T-cell (primary cell): ENCODE measurements at regions of chr13 and their contacts with region 1.

Region 1: DNA sequence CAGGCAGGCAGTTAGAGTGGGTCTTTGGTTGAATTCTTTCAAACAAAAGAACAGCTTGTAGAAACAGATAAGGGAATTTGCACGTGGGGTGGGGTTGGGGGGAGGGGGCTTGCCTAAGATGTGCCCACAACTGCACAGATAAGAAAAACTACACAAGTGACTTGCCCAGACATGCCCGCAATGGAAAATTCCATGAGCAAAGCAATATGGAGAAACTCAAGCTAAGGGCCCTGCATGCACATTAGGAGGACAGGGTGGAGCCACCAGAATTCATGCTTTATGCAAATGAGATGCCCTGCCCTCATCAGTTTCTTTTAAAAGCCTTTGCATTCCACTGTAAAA is 755.6 kb upstream of the MIR17HG start:
- DNase-seq: no peak
- ATAC-seq: no peak
- H3K4me3 ChIP-seq: no peak overlapping the region
- H3K4me3 Mint-ChIP-seq: no peak overlapping the region
- H3K27ac ChIP-seq: no peak overlapping the region
- H3K27ac Mint-ChIP-seq: no peak overlapping the region
- H3K4me1 ChIP-seq: no peaks in the 10 kb centered on the region
- H3K4me1 Mint-ChIP-seq: no peaks in the 10 kb centered on the region
- H3K27me3 ChIP-seq: no peaks in the 10 kb centered on the region
- H3K27me3 Mint-ChIP-seq: no peaks in the 10 kb centered on the region

Region 2: GRCh38 chr13:88685459-88685858 is 1906.4 kb before region 1 on chr13:
- CTCF ChIA-PET with region 1: no interaction called
- POLR2A ChIA-PET with region 1: interaction called in 1 of 2 experiments, 18 read pairs
- DNase-seq: no peak
- ATAC-seq: no peak
- H3K4me3 ChIP-seq: no peak overlapping the region
- H3K4me3 Mint-ChIP-seq: no peak overlapping the region
- H3K27ac ChIP-seq: no peak overlapping the region
- H3K27ac Mint-ChIP-seq: no peak overlapping the region
- H3K4me1 ChIP-seq: no peaks in the 10 kb centered on the region
- H3K4me1 Mint-ChIP-seq: no peaks in the 10 kb centered on the region
- H3K27me3 ChIP-seq: no peaks in the 10 kb centered on the region
- H3K27me3 Mint-ChIP-seq: no peaks in the 10 kb centered on the region

Region 3: GRCh38 chr13:90552702-90553101 is 39.2 kb before region 1 on chr13:
- CTCF ChIA-PET with region 1: no interaction called
- POLR2A ChIA-PET with region 1: no interaction called
- DNase-seq: no peak
- ATAC-seq: no peak
- H3K4me3 ChIP-seq: no peak overlapping the region
- H3K4me3 Mint-ChIP-seq: no peak overlapping the region
- H3K27ac ChIP-seq: no peak overlapping the region
- H3K27ac Mint-ChIP-seq: no peak overlapping the region
- H3K4me1 ChIP-seq: no peaks in the 10 kb centered on the region
- H3K4me1 Mint-ChIP-seq: no peaks in the 10 kb centered on the region
- H3K27me3 ChIP-seq: no peaks in the 10 kb centered on the region
- H3K27me3 Mint-ChIP-seq: no peaks in the 10 kb centered on the region

Region 4: DNA sequence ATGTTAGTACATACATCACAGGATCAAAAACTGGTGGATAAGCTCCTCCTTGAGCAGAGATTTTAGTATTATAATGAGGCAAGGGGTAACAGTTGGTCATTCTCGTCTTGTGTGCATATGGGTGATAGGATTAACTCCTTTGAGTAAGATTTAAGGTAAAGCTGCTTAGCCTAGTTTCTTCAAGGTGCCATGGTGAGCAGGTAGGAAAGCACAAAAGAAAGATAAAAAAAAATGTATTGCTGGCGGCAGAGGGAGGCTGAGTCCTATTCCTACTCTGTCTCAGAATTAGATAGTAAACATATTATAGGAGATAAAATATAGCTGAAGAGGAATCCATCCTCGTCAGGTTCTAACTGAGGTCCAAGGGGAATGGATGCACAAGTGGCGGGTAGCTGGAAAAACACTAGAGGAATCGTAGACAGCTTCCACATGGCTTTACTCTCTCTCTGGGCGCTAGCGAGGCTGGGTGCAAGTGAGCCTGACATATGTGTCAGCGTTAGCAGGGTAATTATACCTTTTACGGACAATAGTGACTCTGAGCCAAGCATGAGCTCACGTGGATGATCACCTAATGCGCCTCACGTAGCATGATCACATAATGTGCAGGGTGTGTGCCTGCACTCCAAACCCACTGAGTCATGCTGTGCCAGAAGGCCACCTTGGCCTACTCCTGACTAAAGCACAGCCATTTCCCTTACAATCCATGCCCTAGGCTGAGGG is 21.3 kb after region 1 on chr13:
- CTCF ChIA-PET with region 1: no interaction called
- POLR2A ChIA-PET with region 1: no interaction called
- DNase-seq: no peak
- ATAC-seq: no peak
- H3K4me3 ChIP-seq: no peak overlapping the region
- H3K4me3 Mint-ChIP-seq: no peak overlapping the region
- H3K27ac ChIP-seq: no peak overlapping the region
- H3K27ac Mint-ChIP-seq: no peak overlapping the region
- H3K4me1 ChIP-seq: no peaks in the 10 kb centered on the region
- H3K4me1 Mint-ChIP-seq: no peaks in the 10 kb centered on the region
- H3K27me3 ChIP-seq: no peaks in the 10 kb centered on the region
- H3K27me3 Mint-ChIP-seq: no peaks in the 10 kb centered on the region

Region 5: DNA sequence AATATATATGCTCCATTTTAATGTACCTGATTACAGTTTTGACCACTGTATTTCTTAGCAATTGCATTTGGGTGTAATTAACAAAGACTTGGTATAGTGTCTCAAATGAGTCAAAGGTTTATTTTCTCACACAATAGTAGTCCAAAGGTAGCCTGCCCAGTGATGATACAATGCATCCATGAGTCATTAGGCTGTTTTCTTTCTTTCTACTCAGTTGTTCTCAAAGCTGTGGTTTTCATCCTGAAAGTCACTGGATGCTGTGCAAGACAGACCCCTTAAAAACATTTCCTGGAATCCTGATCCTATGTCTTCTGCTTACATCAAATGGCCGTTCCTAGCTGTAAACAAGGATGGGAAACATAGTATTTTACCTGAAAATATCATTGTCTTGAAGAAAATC is 104.4 kb after region 1 on chr13:
- CTCF ChIA-PET with region 1: no interaction called
- POLR2A ChIA-PET with region 1: no interaction called
- DNase-seq: no peak
- ATAC-seq: no peak
- H3K4me3 ChIP-seq: no peak overlapping the region
- H3K4me3 Mint-ChIP-seq: no peak overlapping the region
- H3K27ac ChIP-seq: no peak overlapping the region
- H3K27ac Mint-ChIP-seq: no peak overlapping the region
- H3K4me1 ChIP-seq: no peaks in the 10 kb centered on the region
- H3K4me1 Mint-ChIP-seq: no peaks in the 10 kb centered on the region
- H3K27me3 ChIP-seq: no peaks in the 10 kb centered on the region
- H3K27me3 Mint-ChIP-seq: no peaks in the 10 kb centered on the region